ENCODE measurements at regions of chr14 and their contacts with region 1.

Region 1: GRCh38 chr14:52146504-52146903 is 77.6 kb upstream of the NID2 start:
- DNase-seq: no peak
- H3K4me3 Mint-ChIP-seq: no peak overlapping the region
- H3K27ac Mint-ChIP-seq: no peak overlapping the region
- H3K4me1 Mint-ChIP-seq: peaks cover 13% of the 10 kb centered on the region
- H3K27me3 Mint-ChIP-seq: peaks cover 43% of the 10 kb centered on the region
- CTCF ChIP-seq: no peak

Region 2: DNA sequence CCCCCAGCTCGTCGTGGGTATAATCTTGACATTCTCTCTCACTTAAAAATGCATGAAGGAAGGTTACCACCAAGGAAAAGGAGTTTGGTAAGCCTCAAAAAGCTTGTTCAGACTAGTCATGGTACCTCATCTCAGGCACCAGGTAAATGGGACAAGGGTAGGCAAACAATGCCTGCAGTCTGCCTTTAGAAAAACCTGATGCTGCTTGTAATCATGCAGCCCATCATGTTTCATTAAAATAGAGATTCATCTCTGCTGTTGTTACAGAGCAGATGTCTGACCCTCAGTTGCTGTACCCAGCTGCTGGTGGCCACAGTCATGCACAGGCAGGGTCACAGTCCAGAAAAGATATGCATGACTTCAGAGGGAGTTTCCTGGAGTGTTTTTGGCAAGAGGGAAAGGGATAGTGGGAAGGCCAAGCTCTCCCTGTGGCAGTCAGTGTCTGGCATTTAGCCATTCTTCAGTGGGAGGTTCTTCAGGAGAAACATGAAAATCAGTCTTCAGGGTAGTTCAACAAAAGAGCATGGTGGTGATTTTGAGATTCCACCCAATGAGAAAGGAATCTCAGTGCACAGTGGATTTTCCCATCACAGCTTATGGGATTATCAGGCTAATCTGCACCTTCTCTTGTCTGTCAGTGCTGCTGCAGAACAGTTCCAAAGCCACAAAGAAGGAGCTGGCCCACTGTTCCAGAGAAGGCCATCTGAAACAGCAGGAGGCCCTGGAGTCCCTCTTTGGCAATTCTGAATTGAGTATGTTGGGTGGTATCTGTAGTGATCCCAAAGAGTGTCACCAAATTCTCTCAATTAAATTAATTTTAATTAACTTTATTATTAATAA is 697.5 kb before region 1 on chr14:
- CTCF ChIA-PET with region 1: no interaction called
- intact Hi-C with region 1: no loop called
- DNase-seq: no peak
- H3K4me3 Mint-ChIP-seq: no peak overlapping the region
- H3K27ac Mint-ChIP-seq: no peak overlapping the region
- H3K4me1 Mint-ChIP-seq: peaks cover 8% of the 10 kb centered on the region
- H3K27me3 Mint-ChIP-seq: no peaks in the 10 kb centered on the region
- CTCF ChIP-seq: no peak

Region 3: GRCh38 chr14:52272375-52272774 is 125.9 kb after region 1 on chr14:
- CTCF ChIA-PET with region 1: no interaction called
- intact Hi-C with region 1: loop called (anchors 10 kb)
- DNase-seq: peak; percentile 16
- H3K4me3 Mint-ChIP-seq: no peak overlapping the region
- H3K27ac Mint-ChIP-seq: no peak overlapping the region
- H3K4me1 Mint-ChIP-seq: no peaks in the 10 kb centered on the region
- H3K27me3 Mint-ChIP-seq: peaks cover 26% of the 10 kb centered on the region
- CTCF ChIP-seq: no peak

Region 4: GRCh38 chr14:52325126-52325525 is 178.6 kb after region 1 on chr14:
- CTCF ChIA-PET with region 1: no interaction called
- intact Hi-C with region 1: no loop called
- DNase-seq: no peak
- H3K4me3 Mint-ChIP-seq: no peak overlapping the region
- H3K27ac Mint-ChIP-seq: no peak overlapping the region
- H3K4me1 Mint-ChIP-seq: no peaks in the 10 kb centered on the region
- H3K27me3 Mint-ChIP-seq: no peaks in the 10 kb centered on the region
- CTCF ChIP-seq: no peak

Region 5: GRCh38 chr14:52446355-52446754 is 299.9 kb after region 1 on chr14:
- CTCF ChIA-PET with region 1: no interaction called
- intact Hi-C with region 1: no loop called
- DNase-seq: no peak
- H3K4me3 Mint-ChIP-seq: no peak overlapping the region
- H3K27ac Mint-ChIP-seq: no peak overlapping the region
- H3K4me1 Mint-ChIP-seq: no peaks in the 10 kb centered on the region
- H3K27me3 Mint-ChIP-seq: no peaks in the 10 kb centered on the region
- CTCF ChIP-seq: no peak

Measured in Calu3 (cell line).